Right cardiac atrium (tissue), 5 donors: ENCODE measurements at regions of chr6 and their contacts with region 1.

Region 1: DNA sequence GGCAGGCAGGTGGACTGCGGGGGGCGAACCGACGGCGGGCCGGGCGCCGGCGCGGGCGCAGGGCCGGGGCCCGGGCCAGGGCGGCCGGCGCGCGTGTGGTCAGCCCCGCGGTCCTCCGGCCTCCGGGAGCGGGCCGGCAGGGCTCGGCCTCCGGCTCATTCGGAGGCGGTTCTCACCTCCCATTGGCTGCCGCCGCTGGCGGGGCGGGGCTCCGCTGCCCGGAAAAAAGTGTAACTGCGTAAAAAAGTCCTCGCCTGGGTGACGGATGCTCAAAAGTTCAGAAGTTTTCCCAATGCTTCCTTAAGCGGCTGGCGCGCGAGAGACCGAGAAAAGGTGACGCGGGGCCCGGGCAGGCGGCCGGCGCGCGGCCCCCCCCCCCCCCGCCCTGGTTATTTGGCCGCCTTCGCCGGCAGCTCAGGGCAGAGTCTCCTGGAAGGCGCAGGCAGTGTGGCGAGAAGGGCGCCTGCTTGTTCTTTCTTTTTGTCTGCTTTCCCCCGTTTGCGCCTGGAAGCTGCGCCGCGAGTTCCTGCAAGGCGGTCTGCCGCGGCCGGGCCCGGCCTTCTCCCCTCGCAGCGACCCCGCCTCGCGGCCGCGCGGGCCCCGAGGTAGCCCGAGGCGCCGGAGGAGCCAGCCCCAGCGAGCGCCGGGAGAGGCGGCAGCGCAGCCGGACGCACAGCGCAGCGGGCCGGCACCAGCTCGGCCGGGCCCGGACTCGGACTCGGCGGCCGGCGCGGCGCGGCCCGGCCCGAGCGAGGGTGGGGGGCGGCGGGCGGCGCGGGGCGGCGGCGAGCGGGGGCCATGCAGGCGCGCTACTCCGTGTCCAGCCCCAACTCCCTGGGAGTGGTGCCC is at the start of gene FOXC1:
- DNase-seq: peak; percentile 93 to 96 (median 96)
- ATAC-seq: peak; percentile 85 to 91
- H3K4me3 ChIP-seq: peak within 1 kb of the TSS; percentile 97
- H3K27ac ChIP-seq: peak within 1 kb of the TSS; percentile 98
- H3K4me1 ChIP-seq: no peaks in the 10 kb centered on the region
- H3K27me3 ChIP-seq: no peaks in the 10 kb centered on the region
- total RNA-seq, gene FOXC1: 15.1 to 25.0 (median 21.9) TPM

Region 2: GRCh38 chr6:1227935-1228753 is 381.7 kb before region 1 on chr6:
- intact Hi-C with region 1: no loop called
- DNase-seq: no peak
- ATAC-seq: no peak
- H3K4me3 ChIP-seq: no peak overlapping the region
- H3K27ac ChIP-seq: no peak overlapping the region
- H3K4me1 ChIP-seq: no peaks in the 10 kb centered on the region
- H3K27me3 ChIP-seq: no peaks in the 10 kb centered on the region

Region 3: DNA sequence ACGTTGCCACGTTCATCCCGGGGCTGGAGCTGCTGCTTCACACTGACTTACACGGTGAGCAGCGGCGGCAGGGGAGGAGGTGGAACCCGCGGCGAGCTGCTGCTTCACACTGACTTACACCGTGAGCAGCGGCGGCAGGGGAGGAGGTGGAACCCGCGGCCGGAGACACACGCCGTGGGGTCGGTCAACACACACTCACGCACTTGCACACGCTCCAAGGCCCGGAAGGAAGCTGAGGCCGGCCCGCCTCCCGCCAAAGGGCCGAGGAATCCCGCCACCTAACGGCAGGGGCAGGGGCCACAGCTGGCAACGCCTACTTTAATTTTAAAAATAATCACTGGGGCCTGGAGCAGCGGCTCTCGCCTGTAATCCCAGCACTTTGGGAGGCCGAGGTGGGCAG is 94.6 kb before region 1 on chr6:
- intact Hi-C with region 1: no loop called
- DNase-seq: no peak
- ATAC-seq: no peak
- H3K4me3 ChIP-seq: no peak overlapping the region
- H3K27ac ChIP-seq: no peak overlapping the region
- H3K4me1 ChIP-seq: no peaks in the 10 kb centered on the region
- H3K27me3 ChIP-seq: no peaks in the 10 kb centered on the region

Region 4: GRCh38 chr6:2196079-2196679 is 586.3 kb after region 1 on chr6:
- intact Hi-C with region 1: loop called in 2 of 4 experiments (anchors 5 to 10 kb)
- DNase-seq: no peak
- ATAC-seq: peak; percentile 71 to 83
- H3K4me3 ChIP-seq: no peak overlapping the region
- H3K27ac ChIP-seq: no peak overlapping the region
- H3K4me1 ChIP-seq: peaks cover 2% of the 10 kb centered on the region
- H3K27me3 ChIP-seq: no peaks in the 10 kb centered on the region

Region 5: DNA sequence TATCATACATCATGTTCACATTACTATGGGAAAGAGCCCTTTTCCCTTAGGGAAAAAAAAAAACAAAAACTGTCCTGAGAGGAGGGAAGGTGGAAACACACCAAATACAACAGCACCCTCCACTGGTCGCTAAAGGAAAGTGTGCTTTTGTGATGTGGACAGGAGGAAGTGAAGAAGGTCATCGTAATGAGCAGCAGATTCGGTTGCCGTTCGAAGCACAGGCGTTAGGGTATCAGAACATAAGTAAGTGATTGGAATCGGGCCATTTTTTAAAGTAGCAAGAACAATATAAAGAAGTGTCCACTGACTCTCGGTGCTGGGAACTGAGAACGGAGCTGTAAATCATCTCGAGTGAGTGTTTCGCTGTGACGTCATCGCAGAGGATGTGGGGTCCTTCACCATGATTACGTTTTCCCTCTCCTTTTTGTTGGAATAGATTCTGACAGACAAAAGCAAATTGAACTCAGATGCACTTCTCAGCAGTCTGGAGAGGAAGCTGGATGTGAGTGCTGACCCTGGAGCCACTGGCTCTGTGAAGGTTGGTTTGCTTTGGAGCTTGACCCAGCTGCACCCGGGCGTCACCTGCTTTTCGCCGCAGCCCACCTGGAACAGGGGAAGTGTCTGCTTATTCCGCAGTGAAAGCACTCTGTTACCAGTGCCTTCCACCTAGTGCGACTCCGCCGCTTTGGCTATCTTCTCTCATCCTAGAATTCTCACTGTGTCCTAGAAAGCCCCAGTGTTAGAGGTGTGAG is 839.1 kb after region 1 on chr6:
- intact Hi-C with region 1: loop called in 1 of 4 experiments (anchors 10 kb)
- DNase-seq: peak in 1 of 3 donors; percentile 49
- ATAC-seq: peak; percentile 69 to 83
- H3K4me3 ChIP-seq: peak overlapping the region; percentile 27
- H3K27ac ChIP-seq: no peak overlapping the region
- H3K4me1 ChIP-seq: peaks cover 4% of the 10 kb centered on the region
- H3K27me3 ChIP-seq: no peaks in the 10 kb centered on the region

Region 6: GRCh38 chr6:2695454-2696095 is 1085.7 kb after region 1 on chr6:
- intact Hi-C with region 1: loop called in 1 of 4 experiments (anchors 10 kb)
- DNase-seq: no peak
- ATAC-seq: peak in 1 of 2 donors; percentile 44
- H3K4me3 ChIP-seq: no peak overlapping the region
- H3K27ac ChIP-seq: no peak overlapping the region
- H3K4me1 ChIP-seq: no peaks in the 10 kb centered on the region
- H3K27me3 ChIP-seq: no peaks in the 10 kb centered on the region